Caco-2 (cell line): ENCODE measurements at regions of chr11 and their contacts with region 1.

Region 1: GRCh38 chr11:77473801-77474683 is at the start of gene PAK1:
- DNase-seq: peak; percentile 98 to 99
- H3K4me3 ChIP-seq: peak within 1 kb of the TSS; percentile 93
- H3K4me3 Mint-ChIP-seq: peak within 1 kb of the TSS; percentile 93
- H3K27ac Mint-ChIP-seq: peak within 1 kb of the TSS; percentile 96
- H3K4me1 ChIP-seq: peaks cover 34% of the 10 kb centered on the region
- H3K4me1 Mint-ChIP-seq: peaks cover 26% of the 10 kb centered on the region
- H3K27me3 ChIP-seq: no peaks in the 10 kb centered on the region
- H3K27me3 Mint-ChIP-seq: no peaks in the 10 kb centered on the region
- CTCF ChIP-seq: peak; percentile 58 to 86
- total RNA-seq, gene PAK1: 81.1 and 90.1 TPM in 2 replicates

Region 2: GRCh38 chr11:77127232-77127911 is 346.7 kb before region 1 on chr11:
- CTCF ChIA-PET with region 1: no interaction called
- POLR2A ChIA-PET with region 1: no interaction called
- intact Hi-C with region 1: loop called (anchors 5 kb)
- DNase-seq: peak; percentile 70 to 84
- H3K4me3 ChIP-seq: peak overlapping the region; percentile 47
- H3K4me3 Mint-ChIP-seq: peak overlapping the region; percentile 69
- H3K27ac Mint-ChIP-seq: peak overlapping the region; percentile 72
- H3K4me1 ChIP-seq: peaks cover 10% of the 10 kb centered on the region
- H3K4me1 Mint-ChIP-seq: peaks cover 19% of the 10 kb centered on the region
- H3K27me3 ChIP-seq: no peaks in the 10 kb centered on the region
- H3K27me3 Mint-ChIP-seq: no peaks in the 10 kb centered on the region
- CTCF ChIP-seq: peak; percentile 100

Region 3: GRCh38 chr11:77244243-77245027 is 229.6 kb before region 1 on chr11:
- CTCF ChIA-PET with region 1: no interaction called
- POLR2A ChIA-PET with region 1: interaction called, 5 read pairs
- intact Hi-C with region 1: loop called (anchors 5 kb)
- DNase-seq: no peak
- H3K4me3 ChIP-seq: no peak overlapping the region
- H3K4me3 Mint-ChIP-seq: no peak overlapping the region
- H3K27ac Mint-ChIP-seq: no peak overlapping the region
- H3K4me1 ChIP-seq: peaks cover 20% of the 10 kb centered on the region
- H3K4me1 Mint-ChIP-seq: peaks cover 7% of the 10 kb centered on the region
- H3K27me3 ChIP-seq: no peaks in the 10 kb centered on the region
- H3K27me3 Mint-ChIP-seq: no peaks in the 10 kb centered on the region
- CTCF ChIP-seq: no peak

Region 4: GRCh38 chr11:77418155-77418970 is 55.7 kb before region 1 on chr11:
- CTCF ChIA-PET with region 1: interaction called, 10 read pairs
- POLR2A ChIA-PET with region 1: no interaction called
- intact Hi-C with region 1: loop called (anchors 2 kb)
- DNase-seq: no peak
- H3K4me3 ChIP-seq: no peak overlapping the region
- H3K4me3 Mint-ChIP-seq: no peak overlapping the region
- H3K27ac Mint-ChIP-seq: no peak overlapping the region
- H3K4me1 ChIP-seq: peaks cover 33% of the 10 kb centered on the region
- H3K4me1 Mint-ChIP-seq: peaks cover 32% of the 10 kb centered on the region
- H3K27me3 ChIP-seq: no peaks in the 10 kb centered on the region
- H3K27me3 Mint-ChIP-seq: no peaks in the 10 kb centered on the region
- CTCF ChIP-seq: no peak

Region 5: DNA sequence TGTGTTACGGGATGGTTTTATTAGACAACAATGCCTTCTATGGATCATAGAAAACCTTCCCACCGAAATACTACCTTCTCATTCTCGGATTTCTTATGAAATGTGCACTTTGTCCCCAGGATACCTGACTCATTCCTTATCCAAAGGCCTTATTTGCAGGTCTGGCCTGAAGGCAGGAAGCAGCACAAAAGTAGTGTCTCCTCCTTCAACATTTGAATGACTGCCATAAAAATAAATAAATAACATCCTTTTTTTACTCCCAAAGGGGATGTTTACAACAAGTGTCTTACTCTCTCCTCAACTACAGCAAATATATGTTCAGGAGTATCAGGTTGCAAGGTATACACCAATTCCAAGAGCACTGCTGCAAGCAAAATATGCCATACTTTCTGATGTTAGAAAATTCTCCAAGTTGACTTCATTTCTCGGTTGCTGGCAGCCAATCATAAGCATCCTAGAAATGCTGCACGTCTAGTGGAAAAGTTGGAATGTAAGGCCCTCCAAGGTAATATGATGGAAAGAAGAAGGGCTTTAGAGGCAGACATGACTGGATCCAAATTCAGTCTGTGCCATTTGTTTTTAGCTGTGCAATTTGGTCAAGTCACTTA is 41.5 kb after region 1 on chr11:
- CTCF ChIA-PET with region 1: interaction called, 10 read pairs
- POLR2A ChIA-PET with region 1: interaction called, 3 read pairs
- intact Hi-C with region 1: loop called (anchors 1 kb)
- DNase-seq: peak; percentile 83 to 85
- H3K4me3 ChIP-seq: no peak overlapping the region
- H3K4me3 Mint-ChIP-seq: peak overlapping the region; percentile 52
- H3K27ac Mint-ChIP-seq: peak overlapping the region; percentile 6
- H3K4me1 ChIP-seq: peaks cover 17% of the 10 kb centered on the region
- H3K4me1 Mint-ChIP-seq: peaks cover 22% of the 10 kb centered on the region
- H3K27me3 ChIP-seq: no peaks in the 10 kb centered on the region
- H3K27me3 Mint-ChIP-seq: no peaks in the 10 kb centered on the region
- CTCF ChIP-seq: no peak

Region 6: DNA sequence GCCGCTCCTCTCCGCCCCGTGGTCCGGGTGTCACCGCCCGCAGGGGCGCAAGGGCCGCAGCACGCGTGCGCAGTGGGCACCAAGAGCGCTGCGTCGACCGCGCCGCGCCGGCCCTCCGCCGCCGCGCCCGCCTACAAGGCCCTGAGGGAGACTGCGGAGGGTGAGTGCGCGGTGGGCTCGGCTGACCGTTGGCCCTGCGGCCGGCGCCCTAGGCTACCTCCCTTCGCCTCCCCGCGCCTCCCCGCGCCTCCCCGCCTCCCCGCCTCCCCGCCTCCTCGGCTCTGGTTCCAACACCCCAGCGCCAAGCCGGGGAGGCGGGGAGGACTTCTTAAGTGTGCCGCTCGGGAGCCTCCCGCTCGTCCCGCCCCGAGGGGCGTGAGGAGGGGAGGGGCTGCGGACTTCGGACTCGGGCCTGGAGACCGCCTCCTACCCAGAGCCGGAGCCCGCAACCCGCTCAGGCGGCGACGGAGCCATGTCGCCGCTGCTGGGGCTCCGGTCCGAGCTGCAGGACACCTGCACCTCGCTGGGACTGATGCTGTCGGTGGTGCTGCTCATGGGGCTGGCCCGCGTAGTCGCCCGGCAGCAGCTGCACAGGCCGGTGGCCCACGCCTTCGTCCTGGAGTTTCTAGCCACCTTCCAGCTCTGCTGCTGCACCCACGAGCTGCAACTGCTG is 115.6 kb after region 1 on chr11 and contains the start of gene AQP11:
- CTCF ChIA-PET with region 1: interaction called, 6 read pairs
- POLR2A ChIA-PET with region 1: interaction called, 11 read pairs
- intact Hi-C with region 1: loop called (anchors 1 kb)
- DNase-seq: peak; percentile 98 to 99
- H3K4me3 ChIP-seq: peak within 1 kb of the TSS; percentile 79
- H3K4me3 Mint-ChIP-seq: peak within 1 kb of the TSS; percentile 97
- H3K27ac Mint-ChIP-seq: peak within 1 kb of the TSS; percentile 92
- H3K4me1 ChIP-seq: peaks cover 13% of the 10 kb centered on the region
- H3K4me1 Mint-ChIP-seq: peaks cover 34% of the 10 kb centered on the region
- H3K27me3 ChIP-seq: no peaks in the 10 kb centered on the region
- H3K27me3 Mint-ChIP-seq: no peaks in the 10 kb centered on the region
- CTCF ChIP-seq: no peak
- total RNA-seq, gene AQP11: 11.5 and 12.7 TPM in 2 replicates